GM13976 (cell line): ENCODE measurements at regions of chr9 and their contacts with region 1.

Region 1: DNA sequence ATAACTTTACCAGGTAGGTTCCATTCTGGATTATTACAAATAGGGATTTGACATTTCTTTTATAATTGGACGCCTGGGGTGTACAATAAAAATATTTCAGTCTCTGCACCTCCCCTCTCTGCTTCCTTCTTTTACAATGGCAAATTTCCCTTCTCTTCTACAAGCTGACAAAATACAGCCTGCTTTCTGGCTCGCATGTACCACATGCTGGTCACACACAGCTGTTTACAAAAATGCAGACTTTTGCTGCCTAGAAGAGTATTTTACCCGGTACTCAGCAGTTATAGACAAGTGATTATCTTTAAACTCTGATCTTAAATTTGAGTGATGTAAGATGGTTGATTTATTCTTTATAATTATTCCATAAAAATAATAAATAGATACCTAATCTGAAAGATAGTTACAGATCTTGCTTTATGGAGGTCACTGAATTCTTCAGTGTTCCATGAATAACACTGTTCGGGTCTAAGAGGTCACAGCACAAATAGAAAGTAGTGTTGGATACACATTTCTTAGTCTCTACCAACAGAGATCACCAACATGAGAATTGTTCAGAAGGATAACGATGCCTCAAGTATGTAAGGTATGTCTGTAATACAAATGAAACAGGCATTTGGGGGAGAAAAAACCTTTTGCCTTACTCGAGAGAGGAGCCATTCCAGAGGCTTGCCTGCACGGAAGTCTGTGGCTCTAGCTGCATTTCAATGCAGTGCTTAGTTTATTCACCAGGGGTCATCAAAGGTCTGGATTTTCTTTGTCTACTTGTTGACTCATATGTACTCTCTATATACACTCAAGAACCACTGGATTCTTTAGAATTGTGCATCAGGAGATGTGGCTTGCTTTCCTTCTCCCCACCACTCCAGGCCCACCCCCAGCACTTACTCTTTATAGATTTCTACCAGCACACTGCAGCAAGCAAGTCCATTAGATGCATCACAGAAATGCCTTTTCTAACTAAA is 206.6 kb upstream of the RFX3 start:
- DNase-seq: peak; percentile 72
- CTCF ChIP-seq: peak; percentile 60

Region 2: DNA sequence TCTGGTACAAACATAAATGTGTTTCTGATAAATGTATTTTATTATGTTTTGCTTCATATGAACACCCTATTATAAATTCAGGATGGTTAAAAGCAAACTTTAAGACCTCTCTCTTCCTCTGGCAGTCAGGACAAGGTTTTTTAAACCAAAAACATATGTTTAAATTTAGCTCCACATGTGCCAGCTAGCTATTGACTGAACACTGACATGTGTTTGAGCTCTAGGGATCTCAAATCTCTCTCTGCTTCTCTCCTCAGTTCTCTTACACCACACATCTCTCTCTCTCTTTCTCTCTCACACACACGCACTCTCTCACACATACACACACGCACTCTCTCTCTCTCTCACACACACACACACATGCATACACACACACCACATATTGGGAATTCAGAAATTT is 56.4 kb before region 1 on chr9:
- in situ Hi-C with region 1: no loop called
- DNase-seq: no peak
- CTCF ChIP-seq: no peak

Region 3: DNA sequence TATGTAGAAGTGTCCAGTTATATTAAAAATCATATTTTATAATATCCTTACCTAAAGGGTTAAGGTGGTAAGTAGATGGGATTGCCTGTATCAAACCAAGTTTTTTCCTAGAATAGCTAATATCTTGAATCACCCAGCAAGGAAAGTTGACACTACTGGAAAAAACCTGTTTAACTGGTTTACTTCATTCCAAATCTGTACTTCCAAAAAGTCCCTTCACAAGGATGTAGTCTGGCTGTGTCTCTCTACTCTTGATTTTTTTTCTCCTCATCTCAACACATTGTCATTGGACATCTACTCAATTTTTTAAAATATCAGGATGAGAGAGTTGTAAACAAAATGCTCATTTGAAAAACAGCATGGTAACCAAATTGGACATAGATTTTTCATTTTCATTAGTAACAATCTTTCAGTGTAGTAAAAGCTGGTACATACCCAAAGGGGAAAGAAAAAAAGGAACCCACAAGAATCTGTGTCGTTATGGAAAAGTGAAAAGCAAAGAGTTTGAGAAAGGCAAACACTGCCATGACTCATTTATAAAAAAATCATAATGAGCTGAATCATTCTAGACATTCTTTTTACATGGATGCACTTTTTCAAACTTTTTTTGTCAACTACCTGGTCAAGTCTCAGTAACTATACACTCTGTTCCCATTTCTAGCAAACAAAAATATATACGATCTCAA is 394.0 kb after region 1 on chr9:
- in situ Hi-C with region 1: loop called (anchors 10 kb)
- DNase-seq: no peak
- CTCF ChIP-seq: no peak

Region 4: GRCh38 chr9:4339357-4339756 is 607.0 kb after region 1 on chr9:
- in situ Hi-C with region 1: loop called (anchors 25 kb)
- DNase-seq: peak; percentile 77
- CTCF ChIP-seq: peak; percentile 87